Psoas muscle (tissue), 8 donors: ENCODE measurements at regions of chr4 and their contacts with region 1.

Region 1: GRCh38 chr4:101334963-101335572 is 12.3 kb downstream of the PPP3CA start:
- DNase-seq: no peak
- ATAC-seq: no peak
- H3K4me3 ChIP-seq: no peak overlapping the region
- H3K27ac ChIP-seq: no peak overlapping the region
- H3K4me1 ChIP-seq: peaks cover 31% of the 10 kb centered on the region
- H3K27me3 ChIP-seq: no peaks in the 10 kb centered on the region
- CTCF ChIP-seq: no peak

Region 2: DNA sequence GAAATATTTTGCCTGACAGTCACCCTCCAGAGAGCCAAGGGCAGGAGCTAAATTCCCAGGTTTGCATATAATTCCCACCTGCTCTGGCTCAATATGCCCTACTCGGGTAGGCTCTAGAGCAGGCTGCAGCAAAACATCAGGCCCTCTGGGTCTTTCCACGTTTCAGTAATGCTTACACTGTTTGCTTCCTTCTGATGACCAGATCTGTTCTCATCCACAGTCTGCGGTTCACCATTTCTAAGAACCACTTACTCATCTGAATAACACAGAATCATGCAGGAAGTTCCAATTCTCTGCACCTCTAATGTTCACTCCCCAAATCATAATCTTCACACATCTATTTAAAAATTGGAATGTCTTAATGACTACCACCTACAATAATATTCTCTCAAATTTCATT is 129.2 kb before region 1 on chr4:
- intact Hi-C with region 1: no loop called
- DNase-seq: no peak
- ATAC-seq: no peak
- H3K4me3 ChIP-seq: no peak overlapping the region
- H3K27ac ChIP-seq: no peak overlapping the region
- H3K4me1 ChIP-seq: peaks cover 12% of the 10 kb centered on the region
- H3K27me3 ChIP-seq: no peaks in the 10 kb centered on the region
- CTCF ChIP-seq: no peak

Region 3: DNA sequence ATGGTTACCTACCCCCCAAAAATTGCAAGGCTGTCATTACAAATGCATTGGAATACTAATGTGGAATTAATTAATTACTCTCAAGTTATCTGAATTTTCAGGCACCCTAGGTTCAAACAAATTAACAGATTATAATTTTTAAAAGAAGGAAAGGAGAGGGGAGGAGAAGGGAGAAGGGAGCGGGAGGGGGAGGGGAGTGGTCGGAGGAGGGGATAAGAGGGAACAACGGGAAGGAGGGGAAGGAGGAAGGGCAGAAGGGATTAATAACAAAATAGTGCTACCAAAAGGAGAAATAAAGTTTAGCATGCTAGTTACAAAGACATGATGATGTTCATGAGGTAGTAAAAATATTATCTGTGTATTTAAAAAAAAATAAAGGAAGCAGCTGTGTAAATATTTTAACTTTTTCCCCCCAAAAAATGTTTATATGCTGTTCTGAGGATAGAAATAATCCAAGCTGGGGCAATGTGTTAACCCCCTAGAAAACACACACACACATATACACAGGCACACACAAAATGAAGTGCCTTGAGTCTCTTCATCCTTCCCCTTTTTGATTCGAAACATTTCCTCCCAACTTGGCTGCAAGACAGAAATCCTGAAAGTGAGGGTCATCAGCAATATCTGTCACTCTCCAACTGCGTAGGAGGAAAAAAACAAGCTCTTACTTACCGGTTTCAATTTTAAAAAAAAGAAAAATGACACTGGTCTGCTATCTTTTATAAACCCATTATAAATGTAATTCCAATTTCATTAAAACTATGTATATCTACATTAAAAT is 46.5 kb before region 1 on chr4:
- intact Hi-C with region 1: loop called in 1 of 2 experiments (anchors 5 kb)
- DNase-seq: no peak
- ATAC-seq: peak in 1 of 4 donors; percentile 14
- H3K4me3 ChIP-seq: no peak overlapping the region
- H3K27ac ChIP-seq: no peak overlapping the region
- H3K4me1 ChIP-seq: peaks cover 45% of the 10 kb centered on the region
- H3K27me3 ChIP-seq: no peaks in the 10 kb centered on the region
- CTCF ChIP-seq: no peak